ENCODE measurements at regions of chr5 and their contacts with region 1.

Region 1: DNA sequence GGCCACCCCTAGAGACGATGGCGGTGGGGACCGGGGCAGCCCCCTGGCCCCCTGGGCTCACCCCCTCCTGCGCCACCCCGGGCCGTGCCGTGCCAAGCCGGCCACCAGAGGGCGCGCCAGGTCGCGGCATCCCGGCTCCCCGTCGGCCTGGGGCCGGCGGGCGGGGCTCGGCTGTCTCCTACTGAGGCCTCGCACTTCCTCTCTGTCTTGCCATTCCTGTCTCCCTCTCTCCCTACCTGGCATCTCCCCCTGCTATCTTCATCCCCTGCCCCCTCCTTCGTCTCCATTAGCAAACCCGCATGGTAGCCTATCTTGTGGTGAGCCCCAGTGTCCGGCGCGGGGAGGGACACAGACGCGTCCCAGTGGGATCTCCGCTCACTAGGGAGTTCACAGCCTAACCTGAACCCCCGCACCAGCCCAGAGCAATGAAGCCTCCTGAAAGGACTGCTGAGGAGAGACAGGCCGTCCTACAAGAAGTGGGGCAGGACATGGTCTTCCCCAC is 29.8 kb upstream of the FABP6 start:
- DNase-seq: peak; percentile 87
- ATAC-seq: peak; percentile 99

Region 2: DNA sequence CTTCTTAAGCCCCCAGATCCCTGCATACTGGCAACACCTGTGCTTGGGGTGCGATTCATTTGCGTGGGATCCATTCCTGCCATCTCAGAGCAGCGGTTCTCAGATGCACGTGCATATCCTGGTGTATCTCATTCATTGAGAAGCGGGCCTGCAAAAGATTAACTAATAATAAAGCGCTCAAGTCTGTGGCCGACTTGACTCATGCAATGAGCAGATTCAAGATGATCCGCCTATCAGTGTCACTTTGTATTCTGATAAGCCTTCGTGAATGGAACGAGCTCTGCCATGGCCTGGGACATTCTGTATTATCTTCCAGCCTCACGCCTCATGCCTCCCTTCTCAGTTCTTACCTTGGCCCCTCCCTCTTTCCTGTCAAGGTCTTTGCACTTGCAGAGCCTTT is 148.6 kb after region 1 on chr5:
- intact Hi-C with region 1: loop called (anchors 2 kb)
- DNase-seq: no peak
- ATAC-seq: no peak